ENCODE measurements at regions of chr2 and their contacts with region 1.

Region 1: DNA sequence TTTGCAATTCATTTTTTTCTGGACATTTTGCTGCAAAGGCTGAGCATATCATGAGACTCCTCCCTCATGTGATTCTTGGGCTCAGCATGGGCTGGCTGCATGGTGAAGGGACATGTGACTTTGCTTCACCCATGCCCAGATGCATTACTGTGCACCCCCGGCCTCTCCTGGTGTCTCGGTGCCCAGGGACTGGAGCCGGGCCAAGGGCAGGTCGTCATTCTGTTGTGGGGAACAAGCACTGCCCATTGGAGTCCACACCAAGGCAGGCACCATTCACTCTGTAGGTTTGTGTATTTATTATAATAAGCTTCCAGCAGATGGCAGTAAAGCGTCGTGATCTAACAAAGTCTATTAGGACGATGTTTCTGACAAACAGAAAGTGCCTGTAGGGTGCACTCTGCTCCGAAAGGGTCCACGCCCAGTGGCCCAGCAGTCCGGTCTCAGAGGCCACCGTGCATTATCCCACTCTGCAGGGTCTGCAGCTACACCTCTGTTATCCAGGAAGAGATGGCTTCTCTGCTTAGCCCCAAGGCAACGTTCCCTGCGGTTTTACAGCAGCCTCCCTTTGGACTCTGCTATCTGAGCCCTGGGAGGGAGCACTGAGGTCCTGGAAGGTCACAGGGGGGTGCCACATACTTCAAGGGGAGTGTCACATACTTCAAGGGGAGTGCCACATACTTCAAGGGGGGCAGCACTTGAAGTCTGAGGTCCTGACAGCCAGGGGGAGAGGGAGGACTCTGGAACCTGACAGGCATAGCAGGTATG is 219.6 kb downstream of the TSN start:
- DNase-seq: peak in 6 of 10 donors; percentile 12 to 53 (median 38)
- H3K4me3 ChIP-seq: peak overlapping the region in 58 of 59 donors; percentile 18 to 67 (median 50)
- H3K27ac ChIP-seq: peak overlapping the region in 3 of 59 donors; percentile 10 to 61 (median 38)
- H3K27me3 ChIP-seq: no peaks in the 10 kb centered on the region
- CTCF ChIP-seq: peak; percentile 57 to 91 (median 77)

Region 2: GRCh38 chr2:121810959-121811853 is 163.9 kb before region 1 on chr2:
- intact Hi-C with region 1: loop called in 1 of 2 experiments (anchors 5 kb)
- DNase-seq: peak; percentile 33 to 84 (median 69)
- H3K4me3 ChIP-seq: no peak overlapping the region
- H3K27ac ChIP-seq: peak overlapping the region in 34 of 59 donors; percentile 1 to 76 (median 42)
- H3K27me3 ChIP-seq: peaks cover 0 to 2% (median 0%) of the 10 kb centered on the region in 45 donors
- CTCF ChIP-seq: peak; percentile 12 to 81 (median 66)

Region 3: GRCh38 chr2:122136056-122136455 is 161.0 kb after region 1 on chr2:
- intact Hi-C with region 1: loop called in 1 of 2 experiments (anchors 10 kb)
- DNase-seq: no peak
- H3K4me3 ChIP-seq: no peak overlapping the region
- H3K27ac ChIP-seq: no peak overlapping the region
- H3K27me3 ChIP-seq: peaks cover 0 to 3% (median 0%) of the 10 kb centered on the region in 45 donors
- CTCF ChIP-seq: peak in 21 of 56 donors; percentile 6 to 61 (median 41)

Region 4: GRCh38 chr2:122451040-122451439 is 476.0 kb after region 1 on chr2:
- intact Hi-C with region 1: loop called (anchors 10 kb)
- DNase-seq: no peak
- H3K4me3 ChIP-seq: no peak overlapping the region
- H3K27ac ChIP-seq: no peak overlapping the region
- H3K27me3 ChIP-seq: peaks cover 0 to 5% (median 0%) of the 10 kb centered on the region in 45 donors
- CTCF ChIP-seq: peak in 43 of 56 donors; percentile 11 to 62 (median 40)

Measured in dorsolateral prefrontal cortex (tissue), 120 donors.